ENCODE measurements at regions of chr2 and their contacts with region 1.

Region 1: DNA sequence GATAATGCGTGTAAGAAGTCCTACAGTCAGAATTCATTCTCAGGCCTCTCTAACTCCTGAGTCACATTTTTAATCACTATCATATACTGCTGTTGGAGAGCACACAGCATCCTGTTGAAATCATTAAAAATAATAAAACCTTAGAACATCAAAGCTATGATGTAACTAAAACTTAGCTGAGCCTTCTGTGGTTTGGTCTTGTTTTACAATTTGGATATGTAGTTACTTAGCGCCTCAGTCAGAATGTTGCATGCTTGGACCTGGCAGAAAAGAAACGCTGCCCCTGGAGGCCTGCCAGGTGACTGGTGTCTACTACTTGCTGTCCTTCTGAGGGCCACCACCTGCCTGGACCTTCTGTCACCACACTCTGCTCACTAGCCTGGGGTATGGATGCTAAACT is 261.1 kb upstream of the RASGRP3 start:
- DNase-seq: no peak
- H3K4me3 ChIP-seq: no peak overlapping the region
- H3K27ac ChIP-seq: no peak overlapping the region
- H3K4me1 ChIP-seq: no peaks in the 10 kb centered on the region
- H3K27me3 ChIP-seq: no peaks in the 10 kb centered on the region
- CTCF ChIP-seq: no peak
- POLR2A ChIP-seq: no peak

Region 2: GRCh38 chr2:33264766-33265165 is 49.5 kb after region 1 on chr2:
- intact Hi-C with region 1: no loop called
- DNase-seq: no peak
- H3K4me3 ChIP-seq: no peak overlapping the region
- H3K27ac ChIP-seq: no peak overlapping the region
- H3K4me1 ChIP-seq: no peaks in the 10 kb centered on the region
- H3K27me3 ChIP-seq: no peaks in the 10 kb centered on the region
- CTCF ChIP-seq: no peak
- POLR2A ChIP-seq: no peak

Region 3: GRCh38 chr2:33372940-33373553 is 157.7 kb after region 1 on chr2:
- intact Hi-C with region 1: loop called (anchors 5 kb)
- DNase-seq: no peak
- H3K4me3 ChIP-seq: no peak overlapping the region
- H3K27ac ChIP-seq: no peak overlapping the region
- H3K4me1 ChIP-seq: no peaks in the 10 kb centered on the region
- H3K27me3 ChIP-seq: no peaks in the 10 kb centered on the region
- CTCF ChIP-seq: peak; percentile 51 to 78 (median 68)
- POLR2A ChIP-seq: no peak

Measured in breast epithelium (tissue), 4 donors.